Endothelial cell of umbilical vein (primary cell): ENCODE measurements at regions of chr18 and their contacts with region 1.

Region 1: DNA sequence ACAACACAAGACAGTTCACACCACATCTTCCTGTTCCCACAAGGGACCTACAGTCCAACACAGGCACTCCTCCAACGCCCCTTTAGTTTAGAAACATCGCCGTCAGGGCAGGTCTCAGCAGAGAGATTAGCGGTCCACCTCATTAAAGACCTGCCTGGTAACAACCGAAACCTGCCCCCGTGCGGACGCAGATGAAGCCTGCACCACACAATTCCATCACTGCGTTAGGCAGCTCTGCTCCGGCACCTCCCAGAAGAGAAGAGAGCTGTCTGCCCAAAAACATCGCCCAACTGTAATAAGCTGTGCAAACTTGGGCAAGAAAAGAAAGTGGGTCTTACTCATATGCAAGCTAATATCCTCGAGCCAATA is 32.7 kb downstream of the ZNF516 start:
- DNase-seq: no peak
- H3K4me3 ChIP-seq: no peak overlapping the region
- H3K27ac ChIP-seq: no peak overlapping the region
- H3K4me1 ChIP-seq: peaks cover 4% of the 10 kb centered on the region
- H3K27me3 ChIP-seq: no peaks in the 10 kb centered on the region
- CTCF ChIP-seq: no peak
- POLR2A ChIP-seq: no peak

Region 2: GRCh38 chr18:76145521-76146376 is 316.6 kb before region 1 on chr18:
- CTCF ChIA-PET with region 1: no interaction called
- POLR2A ChIA-PET with region 1: no interaction called
- dilution Hi-C with region 1: no loop called
- intact Hi-C with region 1: no loop called
- DNase-seq: no peak
- H3K4me3 ChIP-seq: no peak overlapping the region
- H3K27ac ChIP-seq: no peak overlapping the region
- H3K4me1 ChIP-seq: no peaks in the 10 kb centered on the region
- H3K27me3 ChIP-seq: no peaks in the 10 kb centered on the region
- CTCF ChIP-seq: no peak
- POLR2A ChIP-seq: no peak

Region 3: GRCh38 chr18:76476665-76477561 is 14.6 kb after region 1 on chr18:
- CTCF ChIA-PET with region 1: interaction called, 3 read pairs
- POLR2A ChIA-PET with region 1: no interaction called
- dilution Hi-C with region 1: no loop called
- intact Hi-C with region 1: loop called (anchors 2 kb)
- DNase-seq: peak; percentile 62
- H3K4me3 ChIP-seq: peak overlapping the region; percentile 15 to 68 (median 32)
- H3K27ac ChIP-seq: peak overlapping the region; percentile 72
- H3K4me1 ChIP-seq: peaks cover 24% of the 10 kb centered on the region
- H3K27me3 ChIP-seq: no peaks in the 10 kb centered on the region
- CTCF ChIP-seq: no peak
- POLR2A ChIP-seq: no peak

Region 4: DNA sequence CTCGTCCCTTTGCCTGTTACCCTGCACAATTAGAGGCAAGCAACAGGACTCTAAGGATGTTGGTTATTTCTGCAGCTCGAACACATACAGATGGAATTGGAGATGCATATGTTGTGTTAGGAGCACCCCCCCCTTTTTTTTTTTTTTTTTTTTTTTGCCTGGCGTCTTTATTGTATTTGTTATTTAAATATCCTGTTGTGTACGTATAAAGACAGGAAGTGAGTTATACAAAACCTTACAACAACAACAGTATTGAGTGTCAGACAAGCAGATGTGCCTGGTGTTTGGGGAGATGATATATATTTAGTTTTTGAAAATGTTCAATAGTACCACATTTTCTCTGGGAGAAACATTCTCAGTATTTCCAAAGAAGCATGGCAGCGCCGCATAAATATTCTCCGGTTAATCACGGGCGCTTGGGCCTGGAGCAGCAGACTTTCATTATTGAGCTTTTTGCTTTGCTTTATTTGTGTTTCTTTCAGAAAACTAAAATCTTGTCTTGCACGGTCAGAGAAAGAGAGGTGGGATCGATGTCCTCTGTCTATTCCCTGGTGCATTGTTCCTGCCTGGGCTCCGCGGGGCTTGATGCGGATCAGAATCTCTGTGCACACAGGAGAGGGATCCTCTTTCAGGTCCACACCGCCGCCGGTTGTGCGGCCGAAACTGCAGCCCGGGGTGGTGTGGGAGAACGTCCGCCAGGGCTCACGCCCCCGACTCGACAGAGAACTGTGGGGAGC is 56.0 kb after region 1 on chr18:
- CTCF ChIA-PET with region 1: no interaction called
- POLR2A ChIA-PET with region 1: no interaction called
- dilution Hi-C with region 1: no loop called
- intact Hi-C with region 1: no loop called
- DNase-seq: peak; percentile 30
- H3K4me3 ChIP-seq: peak overlapping the region; percentile 13 to 62 (median 25)
- H3K27ac ChIP-seq: no peak overlapping the region
- H3K4me1 ChIP-seq: peaks cover 3% of the 10 kb centered on the region
- H3K27me3 ChIP-seq: peaks cover 15 to 18% of the 10 kb centered on the region in 2 experiments
- CTCF ChIP-seq: no peak
- POLR2A ChIP-seq: no peak